AG04449 (cell line): ENCODE measurements at regions of chr9 and their contacts with region 1.

Region 1: GRCh38 chr9:17063535-17064135 is 71.2 kb upstream of the CNTLN start:
- DNase-seq: no peak
- H3K4me3 ChIP-seq: no peak overlapping the region
- CTCF ChIP-seq: peak; percentile 82

Region 2: DNA sequence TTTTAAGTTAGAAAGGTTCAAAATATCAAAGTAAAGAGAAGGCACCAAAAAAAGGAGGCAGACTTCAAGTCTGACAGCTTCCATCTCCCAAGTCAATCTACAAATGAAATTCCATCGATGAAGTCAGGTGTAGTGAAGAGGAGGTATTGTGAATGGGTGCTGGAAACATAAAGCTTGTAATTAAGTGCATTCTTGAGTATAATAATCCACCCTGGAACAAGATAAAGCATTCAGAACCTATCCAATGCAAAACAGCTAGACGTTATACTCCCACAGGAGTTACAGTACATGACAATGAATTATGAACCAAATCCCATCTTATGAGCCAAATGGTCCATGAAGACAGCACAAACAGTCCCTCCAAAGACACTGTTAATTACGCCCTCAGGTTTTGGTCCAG is 215.5 kb before region 1 on chr9:
- CTCF ChIA-PET with region 1: no interaction called
- POLR2A ChIA-PET with region 1: no interaction called
- DNase-seq: no peak
- H3K4me3 ChIP-seq: no peak overlapping the region
- CTCF ChIP-seq: no peak

Region 3: GRCh38 chr9:17045381-17045940 is 18.2 kb before region 1 on chr9:
- CTCF ChIA-PET with region 1: interaction called, 28 read pairs
- POLR2A ChIA-PET with region 1: no interaction called
- DNase-seq: no peak
- H3K4me3 ChIP-seq: no peak overlapping the region
- CTCF ChIP-seq: no peak

Region 4: DNA sequence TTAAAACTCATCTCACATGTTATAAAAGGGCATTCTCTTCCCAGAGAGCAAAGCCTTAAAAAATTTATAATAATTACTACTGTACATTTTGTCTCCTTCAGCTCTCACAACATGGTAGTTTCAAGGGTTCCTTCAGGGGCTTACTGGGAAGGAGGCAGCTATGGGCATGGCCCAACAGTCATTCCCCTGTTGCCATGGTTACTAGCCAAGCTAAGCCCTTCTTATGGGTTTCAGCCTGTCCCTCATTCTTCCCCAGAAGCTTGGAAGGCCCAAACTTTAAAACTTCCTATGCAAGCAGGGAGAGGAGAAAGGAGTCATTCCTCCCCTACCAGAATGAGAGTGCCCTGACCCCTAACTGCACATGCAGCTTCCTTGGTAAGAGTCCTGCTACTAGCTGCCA is 11.0 kb before region 1 on chr9:
- CTCF ChIA-PET with region 1: interaction called, 28 read pairs
- POLR2A ChIA-PET with region 1: no interaction called
- DNase-seq: no peak
- H3K4me3 ChIP-seq: no peak overlapping the region
- CTCF ChIP-seq: no peak

Region 5: DNA sequence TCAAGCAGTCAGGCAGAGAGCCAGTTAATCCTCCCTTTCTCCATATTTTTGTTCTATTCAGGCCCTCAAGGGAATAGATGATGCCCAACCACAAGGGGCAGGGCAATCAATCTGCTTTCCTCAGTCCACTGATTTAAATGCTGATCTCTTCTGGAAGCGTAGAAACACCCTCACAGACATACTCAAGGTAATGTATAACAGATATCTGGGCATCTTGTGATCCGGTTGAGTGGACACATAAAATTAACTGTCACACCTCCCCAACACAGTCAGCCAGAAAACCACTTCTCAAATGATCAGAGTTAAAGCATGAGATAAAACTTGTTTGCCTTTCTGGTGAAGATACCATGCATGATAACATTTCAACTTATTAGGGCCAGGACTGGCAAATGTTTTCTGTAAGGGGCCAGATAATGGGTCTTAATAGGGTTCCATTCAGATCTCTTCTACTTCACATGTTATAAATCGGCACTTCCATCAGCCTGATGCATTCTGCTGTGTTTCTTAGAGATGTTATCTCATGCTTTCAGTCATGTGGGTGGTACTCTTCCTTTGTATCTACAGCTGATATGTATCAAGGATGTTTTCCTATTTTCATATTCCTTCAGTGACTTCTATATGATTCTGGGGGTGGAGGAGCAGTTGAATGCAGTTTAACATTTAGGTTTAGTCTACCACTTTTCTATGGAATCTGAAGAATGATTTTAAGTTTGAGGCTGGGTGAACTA is 12.3 kb after region 1 on chr9:
- CTCF ChIA-PET with region 1: interaction called, 33 read pairs
- POLR2A ChIA-PET with region 1: no interaction called
- DNase-seq: no peak
- H3K4me3 ChIP-seq: no peak overlapping the region
- CTCF ChIP-seq: no peak

Region 6: DNA sequence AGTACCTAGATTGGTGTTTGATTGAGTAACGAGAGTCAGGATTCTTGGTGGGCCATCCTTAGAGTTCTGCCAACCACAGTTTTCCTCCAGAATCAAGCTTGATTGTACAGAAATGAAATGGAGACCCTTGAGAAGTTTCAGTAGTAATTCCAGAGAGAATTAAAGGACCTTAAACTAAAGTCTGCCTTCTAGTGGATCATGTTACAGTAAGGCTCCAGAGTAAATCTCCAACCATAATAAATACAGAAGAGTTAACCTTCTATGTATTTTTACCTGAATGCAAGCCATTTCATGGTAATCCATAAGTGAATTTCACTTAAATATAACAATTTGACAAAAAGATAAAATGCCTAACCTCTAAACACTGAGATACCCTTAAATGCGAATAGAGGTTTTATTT is 18.2 kb after region 1 on chr9:
- CTCF ChIA-PET with region 1: interaction called, 33 read pairs
- POLR2A ChIA-PET with region 1: no interaction called
- DNase-seq: no peak
- H3K4me3 ChIP-seq: no peak overlapping the region
- CTCF ChIP-seq: no peak

Region 7: DNA sequence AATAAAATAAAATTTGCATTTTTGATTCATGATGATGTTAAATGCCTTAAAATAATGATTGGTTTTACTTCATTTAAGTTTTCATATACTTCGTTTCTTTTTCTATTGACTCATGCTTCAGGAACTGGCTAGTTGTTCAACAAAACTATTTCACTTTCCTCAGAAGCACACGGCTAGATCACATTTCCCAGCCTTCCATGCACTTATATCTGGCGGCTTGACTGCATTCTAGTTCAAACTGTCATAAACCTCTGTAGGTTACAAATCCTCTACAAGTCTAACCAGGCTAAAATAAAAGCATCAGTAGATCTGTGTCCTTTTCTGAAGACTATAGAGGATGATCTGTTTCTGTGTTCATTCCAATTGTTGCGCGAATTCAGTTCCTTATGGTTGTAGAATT is 24.9 kb after region 1 on chr9:
- CTCF ChIA-PET with region 1: interaction called, 13 read pairs
- POLR2A ChIA-PET with region 1: no interaction called
- DNase-seq: no peak
- H3K4me3 ChIP-seq: no peak overlapping the region
- CTCF ChIP-seq: no peak

Region 8: DNA sequence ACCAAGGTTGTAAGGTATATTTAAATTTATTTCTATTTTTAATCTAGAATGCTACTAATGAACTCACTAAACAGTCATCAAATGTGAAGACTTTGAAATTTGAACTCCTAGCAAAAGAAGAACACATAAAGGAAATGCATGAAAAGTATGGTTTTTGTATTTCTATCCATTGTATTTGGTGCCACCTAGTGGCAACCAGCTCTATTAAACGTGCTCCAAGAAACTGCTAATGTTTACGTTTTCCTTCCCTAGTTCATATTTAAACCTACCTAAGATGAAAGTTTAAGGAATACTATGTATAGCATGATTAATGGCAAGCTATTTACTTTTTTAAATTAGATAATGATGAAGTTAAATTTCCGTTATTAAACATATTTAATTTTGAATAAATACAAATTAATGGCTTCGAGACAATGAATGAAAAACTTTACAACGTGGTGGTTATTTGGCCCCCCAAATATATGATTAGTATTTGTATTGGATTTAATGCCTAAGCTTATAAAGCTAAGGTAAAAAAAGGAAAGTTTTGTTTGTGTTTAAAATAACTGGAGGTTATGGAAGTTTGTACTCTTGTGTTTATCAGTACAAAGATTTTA is 399.3 kb after region 1 on chr9:
- CTCF ChIA-PET with region 1: interaction called, 50 read pairs
- POLR2A ChIA-PET with region 1: no interaction called
- DNase-seq: peak; percentile 16
- H3K4me3 ChIP-seq: no peak overlapping the region
- CTCF ChIP-seq: peak; percentile 45